Right lobe of liver (tissue), 6 donors: ENCODE measurements at regions of chr19 and their contacts with region 1.

Region 1: GRCh38 chr19:35889370-35890112 is 10.8 kb downstream of the NFKBID start:
- DNase-seq: no peak
- ATAC-seq: peak in 1 of 4 donors; percentile 43
- H3K4me3 ChIP-seq: no peak overlapping the region
- H3K27ac ChIP-seq: no peak overlapping the region
- H3K4me1 ChIP-seq: no peaks in the 10 kb centered on the region
- H3K27me3 ChIP-seq: no peaks in the 10 kb centered on the region
- CTCF ChIP-seq: no peak
- POLR2A ChIP-seq: no peak

Region 2: DNA sequence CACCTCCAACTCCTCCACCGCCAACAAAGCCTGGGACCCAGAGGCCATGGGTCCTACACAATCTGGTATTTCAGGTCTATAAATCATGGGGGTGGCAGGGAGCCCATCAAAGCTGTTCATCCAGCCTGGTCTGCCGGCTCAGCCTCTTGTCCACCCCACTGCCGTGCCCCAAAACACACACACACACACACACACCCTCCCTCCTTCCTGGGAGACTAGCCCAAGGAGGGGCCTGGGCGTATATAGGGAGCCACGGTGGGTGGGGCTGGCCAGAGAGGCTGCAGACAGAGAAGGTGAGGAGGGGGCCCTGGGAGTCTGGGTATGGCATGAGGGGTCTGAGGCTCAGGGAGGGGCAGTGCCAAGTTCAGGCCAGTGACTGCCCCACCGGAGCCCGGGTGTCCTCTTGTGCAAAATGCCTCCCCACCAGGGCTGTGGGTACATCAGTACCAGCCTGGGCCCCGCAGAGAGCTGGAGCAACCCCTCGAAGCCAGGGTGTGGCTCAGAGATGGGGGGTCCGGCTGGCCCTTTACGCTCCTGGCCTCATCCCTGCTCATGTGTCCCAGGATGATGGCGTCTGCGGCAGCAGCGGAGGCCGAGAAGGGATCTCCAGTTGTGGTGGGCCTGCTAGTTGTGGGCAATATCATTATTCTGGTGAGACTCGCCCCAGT is 223.2 kb before region 1 on chr19 and contains the start of gene UPK1A:
- intact Hi-C with region 1: no loop called
- DNase-seq: no peak
- ATAC-seq: peak in 1 of 4 donors; percentile 6
- H3K4me3 ChIP-seq: no peak within 1 kb of the TSS
- H3K27ac ChIP-seq: no peak within 1 kb of the TSS
- H3K4me1 ChIP-seq: peaks cover 0 to 13% (median 4%) of the 10 kb centered on the region in 4 donors
- H3K27me3 ChIP-seq: no peaks in the 10 kb centered on the region
- CTCF ChIP-seq: no peak
- POLR2A ChIP-seq: no peak
- total RNA-seq, gene UPK1A: 0.27 TPM in 1 of 6 experiments, not detected in the others

Region 3: GRCh38 chr19:35790981-35791813 is 98.3 kb before region 1 on chr19:
- intact Hi-C with region 1: no loop called
- DNase-seq: peak in 1 of 3 donors; percentile 48
- ATAC-seq: peak in 3 of 4 donors; percentile 19 to 37 (median 20)
- H3K4me3 ChIP-seq: no peak overlapping the region
- H3K27ac ChIP-seq: no peak overlapping the region
- H3K4me1 ChIP-seq: peaks cover 0 to 4% (median 0%) of the 10 kb centered on the region in 4 donors
- H3K27me3 ChIP-seq: no peaks in the 10 kb centered on the region
- CTCF ChIP-seq: no peak
- POLR2A ChIP-seq: no peak

Region 4: GRCh38 chr19:35929876-35930275 is 40.3 kb after region 1 on chr19:
- intact Hi-C with region 1: loop called in 1 of 2 experiments (anchors 5 kb)
- DNase-seq: no peak
- ATAC-seq: no peak
- H3K4me3 ChIP-seq: no peak overlapping the region
- H3K27ac ChIP-seq: no peak overlapping the region
- H3K4me1 ChIP-seq: peaks cover 0 to 5% (median 2%) of the 10 kb centered on the region in 4 donors
- H3K27me3 ChIP-seq: no peaks in the 10 kb centered on the region
- CTCF ChIP-seq: no peak
- POLR2A ChIP-seq: no peak